WTC11 (cell line): ENCODE measurements at regions of chr11 and their contacts with region 1.

Region 1: GRCh38 chr11:93895106-93895862 is 44.9 kb upstream of the VSTM5 start:
- DNase-seq: peak; percentile 20
- ATAC-seq: peak; percentile 96
- H3K4me3 Mint-ChIP-seq: no peak overlapping the region
- H3K27ac Mint-ChIP-seq: no peak overlapping the region
- H3K4me1 Mint-ChIP-seq: no peaks in the 10 kb centered on the region
- H3K27me3 Mint-ChIP-seq: peaks cover 10% of the 10 kb centered on the region
- CTCF ChIP-seq: no peak; the same call in 1 of the 2 replicates

Region 2: GRCh38 chr11:93775289-93775688 is 120.0 kb before region 1 on chr11:
- CTCF ChIA-PET with region 1: no interaction called
- POLR2A ChIA-PET with region 1: no interaction called
- DNase-seq: peak; percentile 63
- ATAC-seq: peak; percentile 83
- H3K4me3 Mint-ChIP-seq: no peak overlapping the region
- H3K27ac Mint-ChIP-seq: no peak overlapping the region
- H3K4me1 Mint-ChIP-seq: peaks cover 7% of the 10 kb centered on the region
- H3K27me3 Mint-ChIP-seq: no peaks in the 10 kb centered on the region
- CTCF ChIP-seq: peak; percentile 52

Region 3: DNA sequence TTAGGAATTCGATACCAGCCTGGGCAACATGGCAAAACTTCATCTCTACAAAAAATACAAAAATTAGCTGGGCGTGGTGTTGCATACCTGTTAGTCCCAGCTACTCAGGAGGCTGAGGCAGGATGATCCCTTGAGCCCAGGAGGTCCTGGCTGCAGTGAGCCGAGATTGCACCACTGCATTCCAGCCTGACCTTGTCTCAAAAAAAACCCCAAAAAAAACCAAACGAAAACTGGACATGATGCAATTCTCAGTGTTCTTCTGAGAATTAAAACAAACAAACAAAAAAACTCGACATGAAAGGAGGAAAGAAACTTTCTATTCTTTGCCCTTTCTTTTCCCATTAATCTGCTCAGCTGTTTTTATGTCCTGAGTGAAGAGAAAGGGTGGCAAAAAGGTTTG is 103.8 kb before region 1 on chr11:
- CTCF ChIA-PET with region 1: no interaction called
- POLR2A ChIA-PET with region 1: no interaction called
- DNase-seq: no peak
- ATAC-seq: no peak
- H3K4me3 Mint-ChIP-seq: no peak overlapping the region
- H3K27ac Mint-ChIP-seq: no peak overlapping the region
- H3K4me1 Mint-ChIP-seq: peaks cover 5% of the 10 kb centered on the region
- H3K27me3 Mint-ChIP-seq: no peaks in the 10 kb centered on the region
- CTCF ChIP-seq: no peak

Region 4: GRCh38 chr11:93875637-93876036 is 19.6 kb before region 1 on chr11:
- CTCF ChIA-PET with region 1: interaction called, 34 read pairs
- POLR2A ChIA-PET with region 1: no interaction called
- DNase-seq: no peak
- ATAC-seq: no peak
- H3K4me3 Mint-ChIP-seq: no peak overlapping the region
- H3K27ac Mint-ChIP-seq: no peak overlapping the region
- H3K4me1 Mint-ChIP-seq: peaks cover 44% of the 10 kb centered on the region
- H3K27me3 Mint-ChIP-seq: no peaks in the 10 kb centered on the region; the same call in 1 of the 2 replicates
- CTCF ChIP-seq: no peak

Region 5: DNA sequence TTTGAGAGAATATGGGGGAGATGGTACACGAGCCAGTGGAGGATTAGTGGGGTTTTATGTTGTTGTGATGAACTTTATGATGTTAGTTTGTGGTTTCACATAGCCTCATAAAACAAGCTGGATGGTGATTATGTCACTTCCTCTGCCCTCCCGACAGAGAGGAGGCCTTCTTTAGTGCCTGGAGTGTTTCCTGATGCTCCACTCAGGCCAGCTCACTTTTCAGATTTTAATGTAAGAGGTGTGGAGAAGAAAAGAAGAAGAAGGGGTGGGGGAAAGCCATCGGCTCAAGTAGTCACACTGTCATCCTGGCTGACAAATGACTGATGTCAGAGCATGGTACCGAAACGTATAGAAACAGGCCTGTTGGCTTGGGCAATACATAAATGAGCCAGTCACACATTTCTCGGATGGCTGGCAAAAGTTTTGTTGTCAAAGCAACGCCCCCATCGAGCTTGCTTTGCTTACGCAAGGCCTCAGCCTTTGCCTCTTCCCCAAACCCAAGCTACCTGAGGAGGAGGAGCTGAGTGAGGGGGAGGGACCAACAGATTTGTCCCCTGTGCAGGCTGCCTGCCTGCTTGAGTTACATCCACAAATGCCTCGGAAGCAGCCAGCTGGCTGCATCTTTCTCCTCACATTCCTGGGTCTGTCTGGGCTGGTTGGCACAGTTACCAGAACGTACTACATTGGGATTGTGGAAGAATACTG is 125.6 kb after region 1 on chr11 and contains the start of gene HEPHL1:
- CTCF ChIA-PET with region 1: interaction called, 11 read pairs
- POLR2A ChIA-PET with region 1: no interaction called
- DNase-seq: peak; percentile 29
- ATAC-seq: peak; percentile 99
- H3K4me3 Mint-ChIP-seq: no peak within 1 kb of the TSS
- H3K27ac Mint-ChIP-seq: no peak within 1 kb of the TSS
- H3K4me1 Mint-ChIP-seq: peaks cover 8% of the 10 kb centered on the region
- H3K27me3 Mint-ChIP-seq: no peaks in the 10 kb centered on the region
- CTCF ChIP-seq: no peak
- total RNA-seq, gene HEPHL1: 0.07 to 0.13 TPM (median 0.07 TPM) in 3 replicates

Region 6: GRCh38 chr11:94183886-94184264 is 288.6 kb after region 1 on chr11:
- CTCF ChIA-PET with region 1: interaction called, 31 read pairs
- POLR2A ChIA-PET with region 1: no interaction called
- DNase-seq: peak; percentile 88
- ATAC-seq: peak; percentile 86
- H3K4me3 Mint-ChIP-seq: no peak overlapping the region
- H3K27ac Mint-ChIP-seq: peak overlapping the region; percentile 60
- H3K4me1 Mint-ChIP-seq: peaks cover 19% of the 10 kb centered on the region
- H3K27me3 Mint-ChIP-seq: no peaks in the 10 kb centered on the region
- CTCF ChIP-seq: peak; percentile 91

Region 7: GRCh38 chr11:94493281-94494125 is 598.2 kb after region 1 on chr11 and contains the starts of genes ANKRD49 and MRE11:
- CTCF ChIA-PET with region 1: interaction called, 14 read pairs
- POLR2A ChIA-PET with region 1: interaction called, 3 read pairs
- DNase-seq: peak; percentile 98
- ATAC-seq: peak; percentile 98
- H3K4me3 Mint-ChIP-seq: peak within 1 kb of the TSS; percentile 95
- H3K27ac Mint-ChIP-seq: peak within 1 kb of the TSS; percentile 99
- H3K4me1 Mint-ChIP-seq: peaks cover 11% of the 10 kb centered on the region
- H3K27me3 Mint-ChIP-seq: no peaks in the 10 kb centered on the region
- CTCF ChIP-seq: no peak
- total RNA-seq, gene ANKRD49: 9.5 to 9.9 TPM (median 9.6 TPM) in 3 replicates
- total RNA-seq, gene MRE11: 34.3 to 38.2 TPM (median 37.8 TPM) in 3 replicates